IMR-90 (cell line): ENCODE measurements at regions of chr7 and their contacts with region 1.

Region 1: GRCh38 chr7:27662490-27663205 is at the start of gene HIBADH:
- DNase-seq: peak; percentile 99
- ATAC-seq: peak; percentile 98
- H3K4me3 ChIP-seq: peak within 1 kb of the TSS; percentile 71
- H3K27ac ChIP-seq: peak within 1 kb of the TSS; percentile 78
- H3K4me1 ChIP-seq: no peaks in the 10 kb centered on the region
- H3K27me3 ChIP-seq: no peaks in the 10 kb centered on the region
- CTCF ChIP-seq: 0 out of 2 replicates have a peak, but pooled peaks have one; percentile 11
- POLR2A ChIP-seq: peak; percentile 62
- RAD21 ChIP-seq: peak; percentile 21; the same call in 1 of the 2 replicates
- total RNA-seq, gene HIBADH: 36.6 and 45.5 TPM in 2 replicates

Region 2: GRCh38 chr7:27739909-27740448 is 77.3 kb after region 1 on chr7 and contains the start of gene TAX1BP1:
- CTCF ChIA-PET with region 1: interaction called, 3 read pairs
- POLR2A ChIA-PET with region 1: no interaction called
- dilution Hi-C with region 1: no loop called
- in situ Hi-C with region 1: no loop called
- intact Hi-C with region 1: loop called (anchors 2 kb)
- DNase-seq: peak; percentile 94
- ATAC-seq: peak; percentile 95
- H3K4me3 ChIP-seq: peak within 1 kb of the TSS; percentile 86
- H3K27ac ChIP-seq: peak within 1 kb of the TSS; percentile 90
- H3K4me1 ChIP-seq: peaks cover 3% of the 10 kb centered on the region; the same call in 1 of the 2 replicates
- H3K27me3 ChIP-seq: no peaks in the 10 kb centered on the region
- CTCF ChIP-seq: no peak
- POLR2A ChIP-seq: peak; percentile 93
- RAD21 ChIP-seq: no peak
- total RNA-seq, gene TAX1BP1: 52.7 and 68.9 TPM in 2 replicates